H1 (cell line): ENCODE measurements at regions of chr16 and their contacts with region 1.

Region 1: DNA sequence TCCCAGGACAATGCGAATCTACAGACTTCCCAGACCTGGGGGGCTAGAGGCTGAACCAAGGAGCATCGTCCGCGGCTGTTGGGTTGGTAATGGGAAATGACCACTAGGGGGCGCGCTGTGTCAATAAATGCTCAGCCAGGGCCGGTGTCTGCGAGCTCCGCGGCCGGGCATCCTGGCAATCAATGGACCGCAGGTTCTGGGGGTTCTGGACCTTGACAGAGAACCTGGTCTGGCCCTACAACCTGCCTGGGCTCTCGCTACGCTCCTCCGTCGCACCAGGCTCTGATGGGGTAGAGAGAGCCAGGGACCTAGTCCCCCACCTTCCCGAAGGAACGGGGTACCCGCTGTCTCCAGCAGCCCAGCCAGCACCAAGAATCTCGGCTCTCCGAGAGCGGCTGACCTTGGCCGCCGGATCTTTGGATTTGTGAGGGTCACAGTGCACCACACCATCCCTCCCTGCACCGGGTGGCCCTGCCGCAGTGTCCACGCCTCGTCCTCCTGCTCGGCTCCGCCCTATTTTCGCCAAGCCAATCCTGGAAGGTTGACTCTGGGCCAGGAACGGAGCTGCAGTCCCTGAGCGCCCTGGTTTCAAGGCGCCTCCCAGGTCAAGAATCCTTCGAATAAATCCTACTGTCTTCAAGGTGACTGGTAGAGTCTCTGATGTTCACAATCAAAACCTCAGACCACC is 20.4 kb upstream of the BEAN1 start:
- DNase-seq: peak; percentile 54 to 97
- H3K4me3 ChIP-seq: peak overlapping the region; percentile 21 to 72 (median 62); a peak in 7 of 8 replicates
- H3K27ac ChIP-seq: no peak overlapping the region
- H3K4me1 ChIP-seq: no peaks in the 10 kb centered on the region; a peak in 1 of 7 replicates
- H3K27me3 ChIP-seq: peaks cover 0 to 3% (median 2%) of the 10 kb centered on the region in 4 experiments; a peak in 2 of 7 replicates
- CTCF ChIP-seq: peak; percentile 82 to 92 (median 84)
- EP300 ChIP-seq: no peak
- POLR2A ChIP-seq: no peak
- RAD21 ChIP-seq: peak; percentile 95 to 96

Region 2: DNA sequence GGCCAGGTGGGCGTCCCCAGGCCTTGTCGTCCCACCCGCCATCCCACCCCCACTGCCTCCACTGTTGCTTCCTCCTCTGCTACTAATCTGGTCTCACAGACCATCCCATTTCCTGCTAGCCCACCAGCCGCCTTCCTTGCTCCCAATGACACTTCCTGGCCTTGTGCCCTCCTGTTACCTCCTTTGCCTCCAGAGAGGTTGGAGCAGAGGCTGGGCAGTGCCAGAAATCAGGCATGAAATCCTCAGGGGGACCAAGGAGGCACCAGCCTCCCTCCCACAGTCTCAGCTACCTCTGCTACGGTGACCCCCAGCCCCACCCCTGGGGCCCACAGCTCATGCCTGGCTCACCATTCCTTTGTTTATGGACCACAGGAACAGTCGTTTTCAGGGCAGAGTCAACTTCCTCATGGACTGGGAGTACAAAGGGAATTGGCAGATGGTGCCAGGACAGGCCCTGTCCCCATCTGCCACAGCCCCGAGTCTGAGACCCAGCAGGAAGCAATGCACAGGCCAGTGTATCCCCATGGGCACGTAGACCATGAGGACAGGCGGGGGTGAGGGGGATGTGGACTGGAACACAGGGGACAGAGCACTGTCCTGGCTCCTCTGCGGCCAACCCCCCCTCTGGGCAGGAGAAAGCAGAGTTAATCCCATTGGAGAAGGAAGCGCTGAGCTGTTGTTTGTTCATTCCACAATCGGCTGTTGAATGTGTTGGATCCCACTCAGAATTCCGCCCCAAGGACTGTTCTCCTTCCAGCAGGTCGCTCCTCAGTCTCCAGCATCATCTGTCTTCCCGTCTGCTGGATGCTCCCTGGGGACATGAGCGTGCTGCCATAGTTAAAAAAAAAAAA is 42.3 kb before region 1 on chr16:
- CTCF ChIA-PET with region 1: interaction called, 18 read pairs
- POLR2A ChIA-PET with region 1: no interaction called
- DNase-seq: no peak
- H3K4me3 ChIP-seq: no peak overlapping the region
- H3K27ac ChIP-seq: no peak overlapping the region
- H3K4me1 ChIP-seq: peaks cover 2 to 22% (median 15%) of the 10 kb centered on the region in 4 experiments
- H3K27me3 ChIP-seq: no peaks in the 10 kb centered on the region
- CTCF ChIP-seq: no peak
- EP300 ChIP-seq: no peak
- POLR2A ChIP-seq: no peak
- RAD21 ChIP-seq: no peak

Region 3: DNA sequence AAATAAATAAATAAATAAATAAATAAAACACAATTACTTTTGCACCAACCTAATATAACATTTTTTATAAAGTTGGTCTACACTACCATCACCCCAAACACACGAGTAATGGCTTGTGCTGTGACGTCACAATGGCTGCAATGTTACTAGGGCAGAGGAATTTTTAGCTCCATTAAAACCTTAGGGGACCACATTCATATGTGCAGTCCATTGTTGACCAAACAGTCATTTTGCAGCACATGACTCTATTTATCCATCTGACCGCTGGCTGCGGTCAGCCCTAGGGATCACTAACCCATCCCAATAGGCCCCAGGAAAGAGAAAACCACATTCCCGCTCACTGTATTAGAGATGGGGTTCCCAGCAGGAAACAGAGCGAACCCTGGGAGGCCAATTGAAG is 30.6 kb before region 1 on chr16:
- CTCF ChIA-PET with region 1: no interaction called
- POLR2A ChIA-PET with region 1: no interaction called
- DNase-seq: no peak
- H3K4me3 ChIP-seq: no peak overlapping the region
- H3K27ac ChIP-seq: no peak overlapping the region
- H3K4me1 ChIP-seq: peaks cover 0 to 4% (median 1%) of the 10 kb centered on the region in 4 experiments; a peak in 1 of 7 replicates
- H3K27me3 ChIP-seq: no peaks in the 10 kb centered on the region
- CTCF ChIP-seq: no peak
- EP300 ChIP-seq: no peak
- POLR2A ChIP-seq: no peak
- RAD21 ChIP-seq: no peak

Region 4: GRCh38 chr16:66427036-66427860 is 20.6 kb after region 1 on chr16 and contains the start of gene BEAN1:
- CTCF ChIA-PET with region 1: interaction called, 18 read pairs
- POLR2A ChIA-PET with region 1: no interaction called
- DNase-seq: peak in 1 of 2 experiments; percentile 66
- H3K4me3 ChIP-seq: peak within 1 kb of the TSS; percentile 42 to 65 (median 45)
- H3K27ac ChIP-seq: no peak within 1 kb of the TSS
- H3K4me1 ChIP-seq: peaks cover 0 to 29% (median 21%) of the 10 kb centered on the region in 4 experiments; a peak in 6 of 7 replicates
- H3K27me3 ChIP-seq: peaks cover 49 to 67% (median 59%) of the 10 kb centered on the region in 4 experiments
- CTCF ChIP-seq: no peak
- EP300 ChIP-seq: no peak
- POLR2A ChIP-seq: no peak
- RAD21 ChIP-seq: no peak
- total RNA-seq, gene BEAN1: not detected in 2 replicates

Region 5: GRCh38 chr16:66483689-66484481 is 77.2 kb after region 1 on chr16:
- CTCF ChIA-PET with region 1: interaction called, 226 read pairs
- POLR2A ChIA-PET with region 1: no interaction called
- DNase-seq: peak; percentile 69 to 95
- H3K4me3 ChIP-seq: no peak overlapping the region
- H3K27ac ChIP-seq: no peak overlapping the region
- H3K4me1 ChIP-seq: peaks cover 0 to 5% (median 2%) of the 10 kb centered on the region in 4 experiments; a peak in 4 of 7 replicates
- H3K27me3 ChIP-seq: no peaks in the 10 kb centered on the region
- CTCF ChIP-seq: peak; percentile 97 to 99 (median 99)
- EP300 ChIP-seq: no peak
- POLR2A ChIP-seq: no peak
- RAD21 ChIP-seq: peak; percentile 95 to 97

Region 6: GRCh38 chr16:66502020-66502913 is 95.6 kb after region 1 on chr16:
- CTCF ChIA-PET with region 1: no interaction called
- POLR2A ChIA-PET with region 1: no interaction called
- DNase-seq: no peak
- H3K4me3 ChIP-seq: no peak overlapping the region
- H3K27ac ChIP-seq: no peak overlapping the region
- H3K4me1 ChIP-seq: peaks cover 0 to 2% (median 0%) of the 10 kb centered on the region in 4 experiments; a peak in 1 of 7 replicates
- H3K27me3 ChIP-seq: no peaks in the 10 kb centered on the region
- CTCF ChIP-seq: no peak
- EP300 ChIP-seq: no peak
- POLR2A ChIP-seq: no peak
- RAD21 ChIP-seq: no peak

Region 7: DNA sequence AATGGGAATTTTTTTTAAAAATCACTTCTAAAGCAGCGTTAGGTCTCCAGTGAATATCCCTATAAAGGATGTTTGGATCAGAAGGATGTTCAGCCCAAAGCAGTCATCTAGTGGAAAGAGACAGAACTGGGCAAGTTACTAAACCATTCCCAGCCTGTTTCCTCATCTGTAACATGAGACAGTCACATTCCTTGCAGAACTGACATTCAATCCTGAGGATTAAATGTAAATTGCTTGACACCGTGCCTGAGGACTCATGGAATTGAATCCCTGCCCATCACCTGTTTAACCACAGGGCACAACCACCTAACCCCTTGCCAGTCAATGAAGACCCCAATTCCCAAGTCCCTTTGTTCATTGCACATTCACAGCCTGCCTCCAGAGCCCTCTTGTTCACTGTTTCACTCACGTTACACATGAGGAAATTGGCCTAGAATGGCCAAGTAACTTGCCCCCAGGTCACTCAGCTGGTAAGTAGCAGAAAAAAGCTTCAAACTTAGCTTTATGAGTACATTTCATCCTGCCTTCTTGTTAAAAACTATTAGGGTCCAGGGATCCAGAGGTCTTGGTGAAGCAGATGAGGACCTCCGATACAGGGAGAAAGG is 174.0 kb after region 1 on chr16:
- CTCF ChIA-PET with region 1: interaction called, 20 read pairs
- POLR2A ChIA-PET with region 1: no interaction called
- DNase-seq: no peak
- H3K4me3 ChIP-seq: no peak overlapping the region; a peak in 1 of 8 replicates
- H3K27ac ChIP-seq: no peak overlapping the region
- H3K4me1 ChIP-seq: peaks cover 0 to 11% (median 10%) of the 10 kb centered on the region in 4 experiments
- H3K27me3 ChIP-seq: peaks cover 19 to 30% (median 27%) of the 10 kb centered on the region in 4 experiments
- CTCF ChIP-seq: no peak
- EP300 ChIP-seq: no peak
- POLR2A ChIP-seq: no peak
- RAD21 ChIP-seq: no peak